ENCODE measurements at regions of chr9 and their contacts with region 1.

Region 1: DNA sequence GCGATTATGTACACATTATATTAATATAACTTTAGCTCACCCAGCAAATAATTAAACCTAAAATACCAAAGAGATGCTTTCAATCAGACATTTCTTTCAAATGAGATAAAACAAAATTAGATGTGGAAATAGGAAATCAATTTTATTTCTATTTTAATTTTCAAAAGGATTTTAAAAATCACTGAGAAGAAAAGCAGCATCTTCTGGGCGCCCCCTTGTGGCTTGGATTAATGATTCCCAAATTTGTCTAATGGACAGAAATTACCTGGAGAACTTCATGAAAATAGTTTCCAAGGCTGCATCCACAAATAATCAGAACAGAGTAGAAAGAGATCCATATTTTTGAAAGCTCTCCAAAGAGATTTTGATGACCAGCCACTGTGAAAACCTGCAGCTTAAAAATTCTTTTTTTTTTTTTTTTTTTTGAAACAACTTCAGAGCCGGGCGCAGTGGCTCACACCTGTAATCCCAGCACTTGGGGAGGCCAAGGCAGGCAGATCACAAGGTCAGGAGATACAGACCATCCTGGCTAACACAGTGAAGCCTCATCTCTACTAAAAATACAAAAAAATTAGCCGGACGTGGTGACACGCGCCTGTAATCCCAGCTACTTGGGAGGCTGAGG is 50.9 kb upstream of the CEMIP2 start:
- DNase-seq: peak in 4 of 5 donors; percentile 47 to 56 (median 50)
- H3K4me3 ChIP-seq: no peak overlapping the region
- H3K4me3 Mint-ChIP-seq: no peak overlapping the region
- H3K27ac ChIP-seq: no peak overlapping the region
- H3K27ac Mint-ChIP-seq: no peak overlapping the region
- H3K4me1 ChIP-seq: no peaks in the 10 kb centered on the region
- H3K4me1 Mint-ChIP-seq: peaks cover 8 to 21% (median 13%) of the 10 kb centered on the region in 4 donors
- H3K27me3 ChIP-seq: no peaks in the 10 kb centered on the region
- H3K27me3 Mint-ChIP-seq: no peaks in the 10 kb centered on the region

Region 2: DNA sequence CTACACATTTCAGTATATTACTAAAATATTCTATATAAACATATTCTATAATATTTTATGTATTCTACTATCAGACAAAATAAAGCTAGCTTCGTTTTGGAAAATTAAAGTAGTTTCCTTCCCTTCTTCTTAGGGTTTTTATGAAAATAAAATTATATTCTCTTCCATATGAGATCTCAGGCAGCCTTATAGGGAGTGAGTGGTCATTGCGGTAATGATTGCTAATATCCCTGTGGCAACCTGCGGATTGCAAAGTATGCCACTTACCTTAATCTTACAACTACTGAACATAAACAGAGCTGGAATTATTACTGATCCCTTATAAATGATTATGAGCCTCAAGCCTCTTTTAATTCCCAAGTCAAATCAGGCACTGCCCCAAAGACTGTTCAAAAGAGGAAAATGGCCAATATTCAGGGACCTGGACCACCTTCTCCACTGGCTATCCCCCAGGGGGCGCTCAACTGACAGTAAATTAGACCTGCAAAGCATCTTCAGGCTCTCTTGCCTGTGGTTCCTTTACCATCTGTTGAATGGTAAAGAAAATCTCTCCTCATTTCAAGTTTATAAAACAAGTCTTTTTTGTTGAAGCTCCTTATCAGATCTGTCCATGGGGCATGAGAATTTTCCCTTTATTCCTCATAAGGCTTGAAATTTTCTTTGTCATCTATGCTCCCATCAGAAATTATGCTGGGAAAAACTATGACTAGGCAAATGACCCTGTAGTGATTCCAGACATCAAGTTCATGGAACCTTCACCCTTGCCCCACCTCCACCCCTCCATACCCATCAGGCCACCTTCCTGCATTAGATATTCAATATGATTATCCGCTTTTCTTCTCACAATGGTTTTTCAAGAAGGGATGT is 214.8 kb before region 1 on chr9:
- CTCF ChIA-PET with region 1: interaction called, 34 read pairs
- POLR2A ChIA-PET with region 1: no interaction called
- intact Hi-C with region 1: loop called (anchors 1 kb)
- DNase-seq: peak; percentile 73 to 79 (median 75)
- H3K4me3 ChIP-seq: no peak overlapping the region
- H3K4me3 Mint-ChIP-seq: no peak overlapping the region
- H3K27ac ChIP-seq: no peak overlapping the region
- H3K27ac Mint-ChIP-seq: no peak overlapping the region
- H3K4me1 ChIP-seq: no peaks in the 10 kb centered on the region
- H3K4me1 Mint-ChIP-seq: no peaks in the 10 kb centered on the region
- H3K27me3 ChIP-seq: no peaks in the 10 kb centered on the region
- H3K27me3 Mint-ChIP-seq: no peaks in the 10 kb centered on the region

Region 3: GRCh38 chr9:71683598-71684235 is 135.5 kb before region 1 on chr9:
- CTCF ChIA-PET with region 1: interaction called, 17 read pairs
- POLR2A ChIA-PET with region 1: no interaction called
- intact Hi-C with region 1: no loop called
- DNase-seq: no peak
- H3K4me3 ChIP-seq: no peak overlapping the region
- H3K4me3 Mint-ChIP-seq: peak overlapping the region; percentile 31 to 79 (median 69)
- H3K27ac ChIP-seq: no peak overlapping the region
- H3K27ac Mint-ChIP-seq: peak overlapping the region; percentile 8 to 90 (median 72)
- H3K4me1 ChIP-seq: peaks cover 37% of the 10 kb centered on the region
- H3K4me1 Mint-ChIP-seq: peaks cover 36 to 59% (median 48%) of the 10 kb centered on the region in 4 donors
- H3K27me3 ChIP-seq: no peaks in the 10 kb centered on the region
- H3K27me3 Mint-ChIP-seq: no peaks in the 10 kb centered on the region

Region 4: GRCh38 chr9:71748280-71748743 is 70.9 kb before region 1 on chr9:
- CTCF ChIA-PET with region 1: interaction called, 13 read pairs
- POLR2A ChIA-PET with region 1: no interaction called
- intact Hi-C with region 1: no loop called
- DNase-seq: no peak
- H3K4me3 ChIP-seq: no peak overlapping the region
- H3K4me3 Mint-ChIP-seq: no peak overlapping the region
- H3K27ac ChIP-seq: no peak overlapping the region
- H3K27ac Mint-ChIP-seq: peak overlapping the region in 2 of 7 donors; percentile 45 to 58
- H3K4me1 ChIP-seq: peaks cover 15% of the 10 kb centered on the region
- H3K4me1 Mint-ChIP-seq: peaks cover 27 to 35% (median 30%) of the 10 kb centered on the region in 4 donors
- H3K27me3 ChIP-seq: no peaks in the 10 kb centered on the region
- H3K27me3 Mint-ChIP-seq: no peaks in the 10 kb centered on the region

Region 5: GRCh38 chr9:71795097-71795813 is 24.0 kb before region 1 on chr9:
- CTCF ChIA-PET with region 1: interaction called, 206 read pairs
- POLR2A ChIA-PET with region 1: interaction called, 7 read pairs
- intact Hi-C with region 1: no loop called
- DNase-seq: peak; percentile 47 to 81 (median 74)
- H3K4me3 ChIP-seq: peak overlapping the region; percentile 10 to 14
- H3K4me3 Mint-ChIP-seq: peak overlapping the region; percentile 61 to 79 (median 70)
- H3K27ac ChIP-seq: peak overlapping the region; percentile 49
- H3K27ac Mint-ChIP-seq: peak overlapping the region; percentile 85 to 97 (median 92)
- H3K4me1 ChIP-seq: peaks cover 74% of the 10 kb centered on the region
- H3K4me1 Mint-ChIP-seq: peaks cover 39 to 68% (median 57%) of the 10 kb centered on the region in 4 donors
- H3K27me3 ChIP-seq: no peaks in the 10 kb centered on the region
- H3K27me3 Mint-ChIP-seq: no peaks in the 10 kb centered on the region

Region 6: DNA sequence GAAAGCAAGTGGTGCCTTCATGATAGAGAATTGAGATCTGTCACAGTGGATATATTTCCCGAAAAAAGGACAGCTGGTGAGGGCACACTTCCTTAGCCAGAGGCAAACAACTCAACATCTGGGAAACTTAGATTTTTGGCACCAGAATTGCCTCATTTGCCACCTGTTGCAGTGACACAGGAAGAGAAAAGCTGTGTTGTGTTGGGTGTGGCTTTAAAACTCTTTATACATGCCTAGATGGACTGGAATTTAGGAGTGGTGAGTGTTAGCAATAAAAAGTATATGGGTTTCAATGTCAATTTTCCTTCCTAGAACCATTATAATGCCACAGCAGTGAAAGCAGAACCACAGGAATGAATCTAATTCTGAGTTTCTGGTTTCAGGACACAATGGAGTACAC is 11.7 kb after region 1 on chr9:
- CTCF ChIA-PET with region 1: interaction called, 16 read pairs
- POLR2A ChIA-PET with region 1: no interaction called
- intact Hi-C with region 1: no loop called
- DNase-seq: no peak
- H3K4me3 ChIP-seq: no peak overlapping the region
- H3K4me3 Mint-ChIP-seq: no peak overlapping the region
- H3K27ac ChIP-seq: no peak overlapping the region
- H3K27ac Mint-ChIP-seq: no peak overlapping the region
- H3K4me1 ChIP-seq: no peaks in the 10 kb centered on the region
- H3K4me1 Mint-ChIP-seq: no peaks in the 10 kb centered on the region
- H3K27me3 ChIP-seq: no peaks in the 10 kb centered on the region
- H3K27me3 Mint-ChIP-seq: no peaks in the 10 kb centered on the region

Measured in CD4-positive, alpha-beta memory T cell (primary cell).